Activated CD4-positive, alpha-beta memory T cell treated with anti-CD3 and anti-CD28 coated beads, Interleukin-2, amount 10 ng/mL, durations not matched to agents 7 days and 5 days (primary cell): ENCODE measurements at regions of chr1 and their contacts with region 1.

Region 1: DNA sequence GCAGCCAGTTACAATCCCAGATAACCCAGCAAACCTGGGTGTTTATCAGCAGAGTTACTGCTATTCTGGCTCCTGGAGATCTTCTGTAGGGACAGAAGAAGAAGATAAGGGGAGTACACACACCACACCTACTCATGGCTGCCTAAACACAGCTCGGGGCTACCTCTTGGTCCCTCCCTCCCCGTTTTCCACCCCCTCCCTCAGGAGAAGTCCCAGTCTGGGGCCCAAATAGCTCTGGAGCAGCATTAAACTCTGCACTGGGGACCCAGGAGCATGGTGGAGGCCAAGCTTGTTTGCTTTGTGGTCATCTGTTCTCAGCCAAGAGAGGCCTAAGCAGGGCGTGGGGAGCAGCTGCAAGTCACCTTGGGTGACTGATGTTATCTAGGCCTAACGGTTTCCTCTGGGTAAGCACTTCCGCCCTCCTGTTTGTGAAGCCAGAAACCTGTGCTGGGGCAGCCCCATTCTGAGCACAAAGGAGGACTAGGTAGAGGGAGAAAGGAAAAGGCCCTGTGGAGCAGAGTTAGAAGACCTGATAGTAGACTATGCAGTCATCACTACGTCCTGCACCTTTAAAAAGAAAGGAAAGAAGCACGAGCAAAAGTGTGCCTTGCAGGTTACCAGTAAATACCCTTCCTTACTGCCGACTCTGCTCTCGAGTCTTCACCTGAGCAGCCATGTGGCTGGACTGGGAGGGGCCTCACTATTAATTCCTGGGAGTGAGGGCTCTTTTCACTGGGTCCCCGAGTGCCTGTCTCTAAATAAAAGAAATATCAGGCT is 2.0 kb upstream of the RCSD1 start:
- DNase-seq: peak; percentile 88
- H3K4me3 Mint-ChIP-seq: peak overlapping the region; percentile 87
- H3K27ac Mint-ChIP-seq: peak overlapping the region; percentile 97
- H3K4me1 Mint-ChIP-seq: peaks cover 58% of the 10 kb centered on the region
- H3K27me3 Mint-ChIP-seq: no peaks in the 10 kb centered on the region

Region 2: DNA sequence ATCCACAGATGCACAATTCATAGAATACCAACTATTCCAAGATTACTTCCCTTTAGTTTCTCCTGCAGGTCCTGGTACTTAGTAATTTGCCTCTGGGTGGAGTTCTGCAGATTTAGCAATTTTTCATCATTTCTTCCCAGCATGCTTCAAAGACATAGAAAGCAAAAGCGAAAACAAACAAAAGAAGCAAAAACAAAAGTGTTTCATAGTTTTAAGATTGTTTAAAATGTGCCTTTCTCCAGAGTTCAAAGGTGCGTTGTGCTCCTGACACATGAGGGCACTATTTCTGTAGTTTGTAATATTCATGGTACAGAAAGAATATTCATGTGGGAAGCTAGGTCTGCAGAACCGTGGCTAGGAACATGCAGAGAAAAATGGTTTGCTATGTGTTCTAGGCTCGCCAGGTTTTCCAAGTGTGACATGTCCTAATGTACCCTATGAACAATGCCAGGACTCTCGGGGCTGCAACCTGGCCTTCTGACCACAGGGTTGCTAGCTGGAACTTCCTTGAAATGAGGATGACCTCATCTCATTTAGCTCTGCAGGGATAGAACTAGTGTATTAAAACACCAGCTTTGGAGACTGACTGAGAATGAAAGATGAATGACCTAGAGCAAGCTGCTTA is 28.0 kb before region 1 on chr1:
- CTCF ChIA-PET with region 1: interaction called, 62 read pairs
- POLR2A ChIA-PET with region 1: interaction called, 189 read pairs
- DNase-seq: peak; percentile 51
- H3K4me3 Mint-ChIP-seq: peak overlapping the region; percentile 40
- H3K27ac Mint-ChIP-seq: peak overlapping the region; percentile 36
- H3K4me1 Mint-ChIP-seq: peaks cover 42% of the 10 kb centered on the region
- H3K27me3 Mint-ChIP-seq: no peaks in the 10 kb centered on the region

Region 3: GRCh38 chr1:167617153-167618147 is 10.6 kb before region 1 on chr1:
- CTCF ChIA-PET with region 1: interaction called, 14 read pairs
- POLR2A ChIA-PET with region 1: interaction called, 166 read pairs
- DNase-seq: peak; percentile 48
- H3K4me3 Mint-ChIP-seq: peak overlapping the region; percentile 73
- H3K27ac Mint-ChIP-seq: peak overlapping the region; percentile 93
- H3K4me1 Mint-ChIP-seq: peaks cover 61% of the 10 kb centered on the region
- H3K27me3 Mint-ChIP-seq: no peaks in the 10 kb centered on the region

Region 4: GRCh38 chr1:167650269-167651160 is 22.5 kb after region 1 on chr1:
- CTCF ChIA-PET with region 1: interaction called, 3 read pairs
- POLR2A ChIA-PET with region 1: interaction called, 16 read pairs
- DNase-seq: no peak
- H3K4me3 Mint-ChIP-seq: no peak overlapping the region
- H3K27ac Mint-ChIP-seq: peak overlapping the region; percentile 53
- H3K4me1 Mint-ChIP-seq: peaks cover 64% of the 10 kb centered on the region
- H3K27me3 Mint-ChIP-seq: no peaks in the 10 kb centered on the region

Region 5: GRCh38 chr1:167705250-167705649 is 77.2 kb after region 1 on chr1:
- CTCF ChIA-PET with region 1: no interaction called
- POLR2A ChIA-PET with region 1: no interaction called
- DNase-seq: no peak
- H3K4me3 Mint-ChIP-seq: no peak overlapping the region
- H3K27ac Mint-ChIP-seq: no peak overlapping the region
- H3K4me1 Mint-ChIP-seq: peaks cover 10% of the 10 kb centered on the region
- H3K27me3 Mint-ChIP-seq: no peaks in the 10 kb centered on the region

Region 6: DNA sequence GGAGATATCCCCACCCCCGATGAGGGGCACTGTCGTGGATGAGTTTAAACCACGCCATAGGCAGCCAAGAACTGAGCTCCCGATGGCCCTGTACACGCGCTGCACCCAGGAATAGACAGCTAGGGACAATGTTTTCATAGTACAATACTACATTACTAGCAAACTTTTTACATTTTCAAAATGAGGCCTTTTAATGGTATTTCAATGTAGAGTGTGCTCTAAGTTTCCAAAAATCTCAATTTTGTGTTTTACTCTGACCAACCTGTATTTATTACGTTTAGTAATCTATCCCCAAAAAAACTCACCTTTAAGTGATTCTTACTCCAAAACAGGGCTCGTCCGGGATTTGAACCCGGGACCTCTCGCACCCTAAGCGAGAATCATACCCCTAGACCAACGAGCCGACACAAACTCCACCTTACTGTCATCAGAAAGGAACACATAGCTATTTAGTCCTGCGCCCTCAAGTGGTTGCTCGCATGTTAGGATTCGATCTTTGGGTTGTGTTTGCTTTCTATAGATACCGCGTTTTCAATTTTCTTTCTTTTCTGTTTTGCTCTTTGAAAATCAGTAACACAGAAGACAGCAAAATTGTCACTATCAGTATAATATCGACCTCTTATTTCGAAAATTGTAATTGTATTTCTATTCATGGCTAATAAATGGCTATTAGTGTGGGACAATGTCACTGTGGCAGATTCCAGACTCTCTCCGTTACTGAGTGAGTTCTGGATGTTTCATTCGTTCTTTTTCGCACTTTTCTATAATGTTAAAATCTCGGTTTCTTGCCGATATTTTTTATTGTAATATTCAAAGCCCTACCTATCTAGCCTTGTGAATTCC is 87.3 kb after region 1 on chr1:
- CTCF ChIA-PET with region 1: interaction called, 13 read pairs
- POLR2A ChIA-PET with region 1: interaction called, 23 read pairs
- DNase-seq: peak; percentile 92
- H3K4me3 Mint-ChIP-seq: peak overlapping the region; percentile 84
- H3K27ac Mint-ChIP-seq: peak overlapping the region; percentile 92
- H3K4me1 Mint-ChIP-seq: peaks cover 46% of the 10 kb centered on the region
- H3K27me3 Mint-ChIP-seq: peaks cover 7% of the 10 kb centered on the region